Psoas muscle (tissue), 8 donors: ENCODE measurements at regions of chr17 and their contacts with region 1.

Region 1: DNA sequence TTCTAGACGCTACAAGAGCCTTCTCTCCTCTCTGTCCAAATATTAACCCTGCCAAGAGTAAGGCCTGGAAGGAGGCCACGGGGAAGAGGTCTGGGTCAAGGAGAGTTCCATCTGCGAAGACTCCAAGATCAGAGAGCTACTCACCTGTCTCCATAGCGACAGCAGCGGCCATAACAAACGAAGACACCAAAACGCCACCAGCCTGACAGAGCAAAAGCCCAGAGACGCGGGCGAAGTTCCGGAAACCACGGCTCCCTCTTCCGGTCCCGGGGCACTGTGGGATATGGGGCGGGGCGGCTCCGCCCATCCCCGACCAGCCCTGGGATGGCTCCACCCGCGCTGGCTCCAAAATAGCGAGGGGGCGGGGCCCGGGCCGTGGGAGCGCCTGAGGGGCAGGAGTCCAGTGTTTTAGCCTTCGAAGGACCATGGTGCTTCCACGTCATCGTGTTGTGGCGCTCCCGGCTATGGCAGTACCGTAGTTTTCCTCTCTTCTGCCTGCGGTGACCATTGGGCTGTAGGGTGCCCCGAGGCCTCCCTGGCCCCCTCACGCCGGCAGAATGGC is at the starts of genes C17orf100 and MED31:
- DNase-seq: peak; percentile 96 to 97
- ATAC-seq: peak; percentile 98 to 99 (median 99)
- H3K4me3 ChIP-seq: peak within 1 kb of the TSS; percentile 84
- H3K27ac ChIP-seq: peak within 1 kb of the TSS; percentile 87
- H3K4me1 ChIP-seq: peaks cover 27% of the 10 kb centered on the region
- H3K27me3 ChIP-seq: peaks cover 0 to 7% (median 4%) of the 10 kb centered on the region in 3 donors
- CTCF ChIP-seq: no peak
- total RNA-seq, gene C17orf100: 0.34 to 0.77 (median 0.65) TPM
- total RNA-seq, gene MED31: 12.2 to 12.8 (median 12.7) TPM

Region 2: DNA sequence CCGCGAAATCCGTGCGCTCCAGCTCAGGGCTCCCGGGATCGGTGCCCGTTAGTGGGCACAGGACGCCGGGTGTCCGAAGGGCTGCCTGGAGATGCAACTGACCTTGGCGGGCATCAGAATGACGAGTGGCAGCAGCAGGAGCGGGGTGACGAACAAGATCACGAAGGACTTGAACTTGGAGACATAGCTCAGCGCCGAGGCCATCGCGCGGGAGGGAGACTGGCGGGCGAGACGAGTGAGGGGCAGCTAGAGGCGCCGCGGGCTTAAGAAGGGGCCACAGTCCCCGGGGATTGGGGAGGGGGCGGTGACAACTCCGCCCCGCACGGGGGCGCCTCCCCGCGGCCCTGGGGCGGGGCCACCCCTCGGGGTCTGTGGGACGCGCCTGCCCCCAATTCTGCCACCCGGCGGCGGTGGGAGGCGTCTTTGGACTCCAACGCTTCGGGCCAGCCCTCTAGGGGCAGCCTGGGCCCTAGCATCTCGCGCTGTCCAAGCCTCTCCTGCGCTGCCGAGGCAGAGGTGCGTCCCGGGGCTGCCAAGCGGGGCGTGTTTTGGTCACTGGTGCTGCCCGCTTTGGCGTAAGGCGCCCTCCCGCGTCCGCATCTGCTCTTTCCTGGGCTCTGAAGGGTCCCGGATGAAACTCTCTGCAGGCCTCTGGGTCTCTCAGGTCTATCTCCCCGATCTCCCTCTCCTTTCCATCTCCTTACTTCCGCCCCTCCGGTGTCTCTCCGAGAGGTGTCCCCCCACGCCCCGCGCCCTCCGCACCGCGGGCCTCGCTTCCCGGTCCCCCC is 61.9 kb after region 1 on chr17 and contains the start of gene SLC13A5:
- intact Hi-C with region 1: no loop called
- DNase-seq: peak in 1 of 2 donors; percentile 36
- ATAC-seq: peak in 1 of 4 donors; percentile 45
- H3K4me3 ChIP-seq: peak within 1 kb of the TSS; percentile 56
- H3K27ac ChIP-seq: no peak within 1 kb of the TSS
- H3K4me1 ChIP-seq: no peaks in the 10 kb centered on the region
- H3K27me3 ChIP-seq: peaks cover 0 to 56% (median 11%) of the 10 kb centered on the region in 3 donors
- CTCF ChIP-seq: peak; percentile 23
- total RNA-seq, gene SLC13A5: 0.17 TPM in 1 of 4 donors, not detected in the others

Region 3: GRCh38 chr17:7014261-7014994 is 363.0 kb after region 1 on chr17:
- intact Hi-C with region 1: loop called in 1 of 2 experiments (anchors 5 kb)
- DNase-seq: peak; percentile 99
- ATAC-seq: peak; percentile 89 to 91 (median 90)
- H3K4me3 ChIP-seq: peak overlapping the region; percentile 82
- H3K27ac ChIP-seq: peak overlapping the region; percentile 98
- H3K4me1 ChIP-seq: peaks cover 35% of the 10 kb centered on the region
- H3K27me3 ChIP-seq: no peaks in the 10 kb centered on the region
- CTCF ChIP-seq: peak; percentile 73